Naive thymus-derived CD4-positive, alpha-beta T cell (primary cell): ENCODE measurements at regions of chr9 and their contacts with region 1.

Region 1: GRCh38 chr9:137551651-137552384 is at the start of gene MRPL41:
- DNase-seq: peak; percentile 77 to 96 (median 85)
- ATAC-seq: peak; percentile 94
- H3K4me3 ChIP-seq: peak within 1 kb of the TSS; percentile 77
- H3K4me3 Mint-ChIP-seq: peak within 1 kb of the TSS; percentile 82 to 96 (median 90)
- H3K27ac ChIP-seq: peak within 1 kb of the TSS; percentile 85
- H3K27ac Mint-ChIP-seq: peak within 1 kb of the TSS; percentile 77 to 91 (median 83)
- H3K4me1 ChIP-seq: peaks cover 0 to 6% of the 10 kb centered on the region in 2 donors
- H3K4me1 Mint-ChIP-seq: peaks cover 11 to 24% (median 17%) of the 10 kb centered on the region in 7 donors
- H3K27me3 ChIP-seq: no peaks in the 10 kb centered on the region
- H3K27me3 Mint-ChIP-seq: no peaks in the 10 kb centered on the region
- total RNA-seq, gene MRPL41: 41.1 to 102 (median 53.9) TPM

Region 2: DNA sequence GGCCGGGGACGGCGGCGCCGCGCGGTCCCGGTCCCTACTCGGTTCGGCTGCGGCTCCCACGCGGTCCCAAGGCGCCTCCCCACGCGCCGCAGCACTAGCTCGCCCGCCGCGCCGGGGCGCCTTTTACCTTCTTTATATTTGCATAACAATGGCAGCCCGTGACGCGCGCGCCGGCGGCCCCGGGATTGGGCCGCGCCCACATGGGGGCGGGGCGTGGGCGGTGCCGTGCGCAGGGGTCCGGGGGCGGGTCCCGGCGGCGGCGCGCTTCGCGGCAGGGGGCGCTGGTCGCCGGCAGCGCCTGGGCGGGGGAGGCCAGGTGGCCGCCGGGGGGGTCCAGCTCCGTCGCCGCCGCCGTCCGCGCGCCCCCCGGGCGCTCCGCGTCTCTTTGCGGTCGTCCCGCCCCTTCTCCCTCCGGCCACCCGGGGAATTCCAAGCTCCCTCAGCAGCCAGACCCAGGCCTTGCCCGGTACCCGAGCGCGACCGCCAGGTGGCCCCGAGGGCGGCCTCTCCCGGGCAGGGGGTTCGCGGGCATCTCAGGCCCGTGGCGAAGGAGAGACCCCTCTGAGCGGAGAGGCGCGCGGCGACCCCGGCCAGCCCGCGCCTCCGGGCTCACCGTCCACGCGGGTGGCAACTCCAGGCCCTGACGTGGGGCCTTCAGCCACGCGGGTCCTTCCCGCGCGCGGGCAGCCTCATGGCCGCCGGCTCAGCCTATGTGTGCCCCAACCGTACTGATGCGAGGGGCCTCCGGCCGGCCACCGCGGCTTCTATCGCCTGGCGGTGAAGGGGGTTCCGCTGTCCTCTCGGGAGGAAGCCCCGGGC is 249.4 kb before region 1 on chr9 and contains the start of gene NRARP:
- CTCF ChIA-PET with region 1: no interaction called
- POLR2A ChIA-PET with region 1: no interaction called
- intact Hi-C with region 1: loop called in 1 of 2 experiments (anchors 10 kb)
- DNase-seq: peak; percentile 90 to 97 (median 92)
- ATAC-seq: peak; percentile 95
- H3K4me3 ChIP-seq: peak within 1 kb of the TSS; percentile 56
- H3K4me3 Mint-ChIP-seq: peak within 1 kb of the TSS; percentile 50 to 88 (median 78)
- H3K27ac ChIP-seq: peak within 1 kb of the TSS; percentile 48
- H3K27ac Mint-ChIP-seq: peak within 1 kb of the TSS in 1 of 9 donors; percentile 26
- H3K4me1 ChIP-seq: peaks cover 7 to 27% of the 10 kb centered on the region in 2 donors
- H3K4me1 Mint-ChIP-seq: peaks cover 0 to 14% (median 11%) of the 10 kb centered on the region in 7 donors
- H3K27me3 ChIP-seq: peaks cover 15 to 19% of the 10 kb centered on the region in 2 donors
- H3K27me3 Mint-ChIP-seq: peaks cover 0 to 30% (median 5%) of the 10 kb centered on the region in 5 donors
- total RNA-seq, gene NRARP: 0.70 to 2.7 (median 1.7) TPM

Region 3: DNA sequence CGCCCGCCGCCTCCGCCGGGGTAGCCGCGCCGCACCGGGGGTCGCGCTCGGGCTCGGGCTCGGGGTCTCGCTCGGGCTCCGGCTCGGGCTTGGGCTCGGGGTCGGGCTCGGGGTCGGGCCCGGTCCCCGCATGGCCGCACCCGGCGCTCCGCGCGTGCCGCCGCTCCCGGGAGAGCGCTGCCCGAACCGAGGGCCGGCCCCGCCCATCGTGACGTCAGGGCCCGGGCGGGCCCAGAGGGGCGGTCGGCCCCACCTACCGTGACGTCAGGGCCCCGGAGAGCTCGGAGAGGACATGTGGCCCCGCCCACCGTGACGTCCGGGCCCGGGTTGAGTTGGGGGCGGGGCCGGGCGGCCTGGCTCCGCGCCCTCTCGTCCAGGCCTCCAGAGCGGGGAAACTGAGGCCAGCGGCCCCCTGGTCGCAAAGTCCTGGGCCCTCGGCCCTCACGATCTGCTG is 92.6 kb before region 1 on chr9 and contains the start of gene NSMF:
- CTCF ChIA-PET with region 1: no interaction called
- POLR2A ChIA-PET with region 1: no interaction called
- intact Hi-C with region 1: loop called (anchors 1 to 5 kb)
- DNase-seq: peak; percentile 90 to 99 (median 95)
- ATAC-seq: peak; percentile 89
- H3K4me3 ChIP-seq: peak within 1 kb of the TSS; percentile 67
- H3K4me3 Mint-ChIP-seq: peak within 1 kb of the TSS; percentile 55 to 79 (median 68)
- H3K27ac ChIP-seq: peak within 1 kb of the TSS; percentile 93
- H3K27ac Mint-ChIP-seq: peak within 1 kb of the TSS; percentile 28 to 98 (median 91)
- H3K4me1 ChIP-seq: peaks cover 36 to 54% of the 10 kb centered on the region in 2 donors
- H3K4me1 Mint-ChIP-seq: peaks cover 0 to 55% (median 33%) of the 10 kb centered on the region in 7 donors
- H3K27me3 ChIP-seq: no peaks in the 10 kb centered on the region
- H3K27me3 Mint-ChIP-seq: no peaks in the 10 kb centered on the region
- total RNA-seq, gene NSMF: 22.9 to 92.0 (median 57.3) TPM

Region 4: GRCh38 chr9:137590462-137591383 is 38.9 kb after region 1 on chr9 and contains the start of gene ZMYND19:
- CTCF ChIA-PET with region 1: no interaction called
- POLR2A ChIA-PET with region 1: interaction called, 4 read pairs
- intact Hi-C with region 1: loop called (anchors 1 kb)
- DNase-seq: peak; percentile 84 to 97 (median 92)
- ATAC-seq: peak; percentile 99
- H3K4me3 ChIP-seq: peak within 1 kb of the TSS; percentile 64
- H3K4me3 Mint-ChIP-seq: peak within 1 kb of the TSS; percentile 88 to 96 (median 94)
- H3K27ac ChIP-seq: peak within 1 kb of the TSS; percentile 71
- H3K27ac Mint-ChIP-seq: peak within 1 kb of the TSS in 8 of 9 donors; percentile 69 to 95 (median 90)
- H3K4me1 ChIP-seq: peaks cover 0 to 12% of the 10 kb centered on the region in 2 donors
- H3K4me1 Mint-ChIP-seq: peaks cover 7 to 27% (median 16%) of the 10 kb centered on the region in 7 donors
- H3K27me3 ChIP-seq: no peaks in the 10 kb centered on the region
- H3K27me3 Mint-ChIP-seq: no peaks in the 10 kb centered on the region
- total RNA-seq, gene ZMYND19: 13.3 to 32.4 (median 26.6) TPM

Region 5: DNA sequence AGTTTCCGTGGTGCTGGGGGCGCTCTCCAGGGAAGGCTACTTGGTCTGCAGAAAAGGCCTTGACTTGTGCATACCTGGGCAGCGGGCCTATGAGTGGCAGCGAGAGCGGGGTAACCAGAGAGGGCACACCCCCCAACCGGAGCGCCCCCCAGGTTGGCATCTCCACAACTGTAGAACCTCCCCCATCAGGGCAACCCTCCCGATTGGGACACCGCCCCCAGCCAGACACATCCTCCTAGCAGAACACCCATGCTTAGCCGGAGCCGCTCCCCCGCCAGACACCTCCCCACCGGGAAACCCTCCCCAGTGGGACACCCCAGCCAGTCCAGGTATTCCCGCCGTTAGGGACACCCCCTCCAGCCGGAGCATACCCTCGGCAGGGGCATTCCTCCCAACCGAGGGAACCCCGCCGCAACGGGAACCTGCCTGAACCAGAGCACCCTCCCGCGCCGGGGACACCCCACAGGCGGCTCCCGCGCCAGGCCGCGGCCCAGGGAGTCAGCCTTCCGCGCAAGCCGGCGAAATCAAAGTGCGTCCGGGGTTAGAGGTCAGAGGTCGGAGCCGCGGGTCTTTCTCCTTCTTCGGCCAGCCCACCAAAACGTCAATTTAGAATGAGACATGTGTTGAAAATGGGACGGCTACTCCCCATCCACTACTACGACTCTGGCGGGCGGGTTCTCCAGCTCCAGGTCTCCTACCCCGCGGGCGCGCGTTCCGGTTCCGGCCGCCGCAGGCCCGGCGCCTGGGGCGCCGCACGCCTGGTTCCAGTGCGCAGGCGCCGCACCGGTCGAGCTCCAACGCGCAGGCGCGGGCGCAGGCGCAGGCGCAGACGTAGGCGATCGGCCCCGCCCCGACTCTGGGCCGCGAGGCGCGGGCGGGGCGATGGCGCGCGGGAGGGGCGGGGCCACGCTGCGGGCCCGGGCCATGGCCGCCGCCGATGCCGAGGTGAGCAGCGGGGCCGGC is 66.6 kb after region 1 on chr9 and contains the start of gene EHMT1:
- CTCF ChIA-PET with region 1: no interaction called
- POLR2A ChIA-PET with region 1: interaction called, 6 read pairs
- intact Hi-C with region 1: loop called (anchors 1 kb)
- DNase-seq: peak; percentile 79 to 99 (median 94)
- ATAC-seq: peak; percentile 95
- H3K4me3 ChIP-seq: peak within 1 kb of the TSS; percentile 80
- H3K4me3 Mint-ChIP-seq: peak within 1 kb of the TSS; percentile 86 to 98 (median 90)
- H3K27ac ChIP-seq: peak within 1 kb of the TSS; percentile 89
- H3K27ac Mint-ChIP-seq: peak within 1 kb of the TSS; percentile 70 to 96 (median 92)
- H3K4me1 ChIP-seq: peaks cover 21 to 29% of the 10 kb centered on the region in 2 donors
- H3K4me1 Mint-ChIP-seq: peaks cover 26 to 48% (median 43%) of the 10 kb centered on the region in 7 donors
- H3K27me3 ChIP-seq: no peaks in the 10 kb centered on the region
- H3K27me3 Mint-ChIP-seq: no peaks in the 10 kb centered on the region
- total RNA-seq, gene EHMT1: 111 to 132 (median 117) TPM